Activated CD4-positive, alpha-beta T cell treated with anti-CD3 and anti-CD28 coated beads for 36 hours (primary cell): ENCODE measurements at regions of chr2 and their contacts with region 1.

Region 1: GRCh38 chr2:65064728-65065552 is 8.7 kb downstream of the CEP68 start:
- DNase-seq: peak; percentile 66
- ATAC-seq: peak; percentile 84
- H3K4me3 Mint-ChIP-seq: peak overlapping the region; percentile 35
- H3K27ac Mint-ChIP-seq: peak overlapping the region; percentile 76
- H3K4me1 Mint-ChIP-seq: peaks cover 44% of the 10 kb centered on the region
- H3K27me3 Mint-ChIP-seq: no peaks in the 10 kb centered on the region

Region 2: GRCh38 chr2:63861220-63861822 is 1203.6 kb before region 1 on chr2:
- CTCF ChIA-PET with region 1: no interaction called
- POLR2A ChIA-PET with region 1: no interaction called
- intact Hi-C with region 1: no loop called
- DNase-seq: peak; percentile 73
- ATAC-seq: peak; percentile 39
- H3K4me3 Mint-ChIP-seq: no peak overlapping the region
- H3K27ac Mint-ChIP-seq: no peak overlapping the region
- H3K4me1 Mint-ChIP-seq: peaks cover 43% of the 10 kb centered on the region
- H3K27me3 Mint-ChIP-seq: no peaks in the 10 kb centered on the region

Region 3: GRCh38 chr2:65129826-65130663 is 65.1 kb after region 1 on chr2 and contains the start of gene RAB1A:
- CTCF ChIA-PET with region 1: interaction called, 14 read pairs
- POLR2A ChIA-PET with region 1: interaction called, 14 read pairs
- intact Hi-C with region 1: loop called (anchors 2 kb)
- DNase-seq: peak; percentile 100
- ATAC-seq: peak; percentile 95
- H3K4me3 Mint-ChIP-seq: peak within 1 kb of the TSS; percentile 100
- H3K27ac Mint-ChIP-seq: peak within 1 kb of the TSS; percentile 100
- H3K4me1 Mint-ChIP-seq: peaks cover 30% of the 10 kb centered on the region
- H3K27me3 Mint-ChIP-seq: no peaks in the 10 kb centered on the region
- total RNA-seq, gene RAB1A: 77.1 to 84.8 TPM

Region 4: GRCh38 chr2:65169760-65170136 is 104.8 kb after region 1 on chr2:
- CTCF ChIA-PET with region 1: interaction called, 60 read pairs
- POLR2A ChIA-PET with region 1: no interaction called
- intact Hi-C with region 1: loop called (anchors 1 kb)
- DNase-seq: no peak
- ATAC-seq: no peak
- H3K4me3 Mint-ChIP-seq: no peak overlapping the region
- H3K27ac Mint-ChIP-seq: no peak overlapping the region
- H3K4me1 Mint-ChIP-seq: no peaks in the 10 kb centered on the region
- H3K27me3 Mint-ChIP-seq: no peaks in the 10 kb centered on the region

Region 5: DNA sequence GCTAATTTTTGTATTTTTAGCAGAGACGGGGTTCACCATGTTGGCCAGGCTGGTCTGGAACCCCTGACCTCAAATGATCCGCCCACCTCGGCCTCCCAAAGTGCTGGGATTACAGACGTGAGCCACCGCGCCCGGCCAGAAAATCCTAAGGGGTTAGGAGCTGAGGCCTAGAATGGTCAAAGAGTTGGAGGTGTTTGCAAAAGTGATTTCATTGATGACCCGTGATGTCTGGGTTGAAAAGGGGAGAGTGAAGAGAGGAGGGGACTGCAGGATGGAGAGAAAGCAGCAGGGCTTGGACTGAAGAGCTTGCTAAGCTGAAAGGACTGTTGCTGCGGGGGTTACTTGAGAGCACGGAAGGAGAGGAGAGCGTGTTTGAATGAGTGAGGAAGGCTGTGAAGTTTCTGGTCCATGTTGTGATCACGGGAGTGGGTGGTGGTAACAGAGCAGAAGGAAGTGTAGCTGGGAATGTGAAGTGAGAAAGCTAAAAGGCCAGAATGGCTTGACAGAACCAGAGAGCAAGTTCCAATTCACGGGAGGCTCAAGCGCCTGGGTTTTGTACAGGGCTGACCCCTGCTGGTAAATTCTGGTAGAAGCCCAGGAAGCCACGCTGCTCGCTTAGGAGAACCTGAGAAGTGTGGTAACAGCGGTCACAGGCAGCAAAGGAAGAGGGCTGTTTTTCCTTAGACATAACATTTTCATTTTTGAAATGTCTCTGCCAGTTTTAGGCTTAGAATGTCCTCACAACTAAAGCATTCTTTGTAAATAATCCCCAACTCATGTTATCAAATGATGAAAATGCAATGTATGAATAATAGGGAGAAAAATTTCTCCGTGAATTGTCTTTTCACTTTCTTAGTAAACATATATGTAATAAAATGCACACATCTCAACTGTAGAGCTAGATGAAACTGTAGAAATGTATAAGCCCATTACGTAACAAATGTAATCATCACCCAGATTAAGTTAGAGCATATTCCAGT is 122.2 kb after region 1 on chr2:
- CTCF ChIA-PET with region 1: interaction called, 25 read pairs
- POLR2A ChIA-PET with region 1: interaction called, 3 read pairs
- intact Hi-C with region 1: loop called (anchors 1 kb)
- DNase-seq: peak; percentile 77
- ATAC-seq: peak; percentile 87
- H3K4me3 Mint-ChIP-seq: no peak overlapping the region
- H3K27ac Mint-ChIP-seq: no peak overlapping the region
- H3K4me1 Mint-ChIP-seq: peaks cover 4% of the 10 kb centered on the region
- H3K27me3 Mint-ChIP-seq: peaks cover 9% of the 10 kb centered on the region

Region 6: GRCh38 chr2:65554765-65555591 is 490.0 kb after region 1 on chr2:
- CTCF ChIA-PET with region 1: interaction called, 3 read pairs
- POLR2A ChIA-PET with region 1: no interaction called
- intact Hi-C with region 1: loop called in 1 of 2 experiments (anchors 5 kb)
- DNase-seq: peak; percentile 41
- ATAC-seq: peak; percentile 65
- H3K4me3 Mint-ChIP-seq: no peak overlapping the region
- H3K27ac Mint-ChIP-seq: peak overlapping the region; percentile 12
- H3K4me1 Mint-ChIP-seq: peaks cover 15% of the 10 kb centered on the region
- H3K27me3 Mint-ChIP-seq: peaks cover 8% of the 10 kb centered on the region